Activated CD4-positive, alpha-beta memory T cell treated with anti-CD3 and anti-CD28 coated beads for 36 hours (primary cell): ENCODE measurements at regions of chr1 and their contacts with region 1.

Region 1: GRCh38 chr1:246329900-246330299 is 177.2 kb downstream of the SMYD3 start:
- DNase-seq: peak; percentile 42
- H3K4me3 Mint-ChIP-seq: no peak overlapping the region
- H3K27ac Mint-ChIP-seq: peak overlapping the region; percentile 72
- H3K4me1 Mint-ChIP-seq: peaks cover 49% of the 10 kb centered on the region
- H3K27me3 Mint-ChIP-seq: no peaks in the 10 kb centered on the region

Region 2: GRCh38 chr1:245953876-245954660 is 375.8 kb before region 1 on chr1:
- CTCF ChIA-PET with region 1: no interaction called
- POLR2A ChIA-PET with region 1: no interaction called
- intact Hi-C with region 1: loop called (anchors 5 kb)
- DNase-seq: peak; percentile 15
- H3K4me3 Mint-ChIP-seq: peak overlapping the region; percentile 65
- H3K27ac Mint-ChIP-seq: peak overlapping the region; percentile 90
- H3K4me1 Mint-ChIP-seq: peaks cover 16% of the 10 kb centered on the region
- H3K27me3 Mint-ChIP-seq: no peaks in the 10 kb centered on the region

Region 3: DNA sequence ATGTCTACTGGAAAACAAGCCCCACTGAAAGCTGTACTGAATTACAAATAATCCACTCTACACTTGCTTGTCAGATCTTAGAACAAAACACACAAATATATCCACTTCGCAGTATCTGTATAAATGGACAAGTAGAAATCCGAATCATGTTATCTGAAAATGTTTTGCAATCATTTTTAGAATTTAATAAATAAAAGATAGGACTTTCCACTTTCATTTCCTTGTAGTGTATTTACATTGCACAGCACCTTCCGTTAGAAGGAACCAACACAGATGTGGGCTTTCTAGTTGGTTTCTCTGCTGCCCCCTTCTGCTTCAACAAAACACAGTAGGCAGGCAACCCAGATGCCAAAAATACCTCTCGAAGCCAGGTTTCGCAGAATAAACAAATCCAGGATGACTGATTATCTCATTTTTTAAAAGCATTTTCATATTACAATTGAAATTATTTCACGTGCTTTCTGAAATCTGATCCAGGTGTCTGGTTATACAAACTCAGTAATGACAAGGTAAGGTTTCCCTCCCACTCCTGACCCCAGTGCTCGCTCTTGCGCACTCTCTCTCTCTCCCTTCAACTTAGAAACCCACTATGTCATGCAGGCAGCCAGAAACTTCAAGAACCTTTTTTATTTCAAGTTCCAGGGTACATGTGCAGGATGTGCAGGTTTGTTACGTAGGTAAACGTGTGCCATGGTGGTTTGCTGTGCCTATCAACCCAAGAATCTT is 212.7 kb before region 1 on chr1:
- CTCF ChIA-PET with region 1: no interaction called
- POLR2A ChIA-PET with region 1: no interaction called
- intact Hi-C with region 1: loop called (anchors 1 kb)
- DNase-seq: peak; percentile 37
- H3K4me3 Mint-ChIP-seq: peak overlapping the region; percentile 10
- H3K27ac Mint-ChIP-seq: peak overlapping the region; percentile 43
- H3K4me1 Mint-ChIP-seq: peaks cover 11% of the 10 kb centered on the region
- H3K27me3 Mint-ChIP-seq: no peaks in the 10 kb centered on the region

Region 4: GRCh38 chr1:246428542-246429308 is 98.8 kb after region 1 on chr1:
- CTCF ChIA-PET with region 1: no interaction called
- POLR2A ChIA-PET with region 1: no interaction called
- intact Hi-C with region 1: loop called (anchors 1 kb)
- DNase-seq: peak; percentile 78
- H3K4me3 Mint-ChIP-seq: no peak overlapping the region
- H3K27ac Mint-ChIP-seq: no peak overlapping the region
- H3K4me1 Mint-ChIP-seq: peaks cover 9% of the 10 kb centered on the region
- H3K27me3 Mint-ChIP-seq: no peaks in the 10 kb centered on the region

Region 5: DNA sequence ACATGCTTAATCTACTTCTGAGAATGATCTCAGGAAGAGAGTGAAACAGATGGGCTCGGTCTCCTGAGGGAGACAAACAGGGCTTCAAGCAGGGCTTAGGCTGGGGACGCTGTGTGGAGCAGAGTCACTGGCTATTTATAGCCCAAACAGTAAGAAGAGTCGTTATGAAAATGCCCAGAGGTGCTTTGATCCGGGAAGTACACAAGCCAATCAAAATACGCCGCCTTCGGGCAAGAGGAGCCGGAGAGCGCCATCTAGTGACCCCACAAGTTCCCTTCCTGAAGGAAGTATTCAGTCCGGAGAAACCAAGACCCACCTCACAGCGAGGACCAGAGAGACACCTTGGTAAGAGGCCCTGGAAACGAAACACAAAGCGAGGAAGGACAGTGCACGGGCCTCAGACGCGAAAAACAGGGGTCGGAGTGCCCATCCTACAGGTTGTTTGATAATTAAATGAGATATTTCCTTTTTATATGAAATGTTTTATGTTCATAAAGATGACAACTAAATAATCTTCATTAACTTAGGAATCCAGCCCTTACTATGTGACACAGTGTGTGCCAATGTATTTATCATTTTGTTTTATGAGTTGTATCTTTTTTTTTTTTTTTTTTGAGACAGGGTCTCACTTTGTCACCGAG is 369.3 kb after region 1 on chr1:
- CTCF ChIA-PET with region 1: no interaction called
- POLR2A ChIA-PET with region 1: no interaction called
- intact Hi-C with region 1: loop called (anchors 5 kb)
- DNase-seq: peak; percentile 92
- H3K4me3 Mint-ChIP-seq: peak overlapping the region; percentile 49
- H3K27ac Mint-ChIP-seq: no peak overlapping the region
- H3K4me1 Mint-ChIP-seq: peaks cover 6% of the 10 kb centered on the region
- H3K27me3 Mint-ChIP-seq: no peaks in the 10 kb centered on the region